AG04449 (cell line): ENCODE measurements at regions of chr10 and their contacts with region 1.

Region 1: GRCh38 chr10:98309366-98310355 is 41.7 kb upstream of the LOXL4 start:
- DNase-seq: peak; percentile 16
- H3K4me3 ChIP-seq: peak overlapping the region; percentile 15
- CTCF ChIP-seq: peak; percentile 96

Region 2: GRCh38 chr10:98242823-98243222 is 66.8 kb before region 1 on chr10:
- CTCF ChIA-PET with region 1: interaction called, 109 read pairs
- POLR2A ChIA-PET with region 1: no interaction called
- DNase-seq: no peak
- H3K4me3 ChIP-seq: no peak overlapping the region
- CTCF ChIP-seq: peak; percentile 50

Region 3: GRCh38 chr10:98262571-98262970 is 47.1 kb before region 1 on chr10:
- CTCF ChIA-PET with region 1: interaction called, 142 read pairs
- POLR2A ChIA-PET with region 1: no interaction called
- DNase-seq: no peak
- H3K4me3 ChIP-seq: no peak overlapping the region
- CTCF ChIP-seq: peak; percentile 49

Region 4: DNA sequence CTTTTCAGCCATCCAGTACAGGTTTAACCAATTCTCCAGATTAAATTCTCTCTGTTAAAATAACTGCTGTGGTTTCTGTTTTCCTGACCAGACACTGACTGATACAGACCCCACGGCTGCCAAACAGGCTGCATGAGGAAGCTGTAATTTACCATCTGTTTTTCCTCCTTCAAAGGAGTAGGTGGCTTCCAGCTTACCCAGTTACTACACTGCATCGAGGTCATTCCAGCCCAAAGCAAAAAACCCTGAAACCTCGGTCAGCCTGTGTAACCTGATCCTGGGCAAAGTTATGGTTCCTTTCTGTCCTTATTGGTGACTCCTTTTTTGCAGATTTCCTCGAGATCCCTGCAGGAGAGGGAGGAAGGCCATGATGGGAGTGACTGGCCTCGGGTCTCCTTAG is 13.8 kb before region 1 on chr10:
- CTCF ChIA-PET with region 1: interaction called, 47 read pairs
- POLR2A ChIA-PET with region 1: interaction called, 9 read pairs
- DNase-seq: no peak
- H3K4me3 ChIP-seq: no peak overlapping the region
- CTCF ChIP-seq: no peak

Region 5: DNA sequence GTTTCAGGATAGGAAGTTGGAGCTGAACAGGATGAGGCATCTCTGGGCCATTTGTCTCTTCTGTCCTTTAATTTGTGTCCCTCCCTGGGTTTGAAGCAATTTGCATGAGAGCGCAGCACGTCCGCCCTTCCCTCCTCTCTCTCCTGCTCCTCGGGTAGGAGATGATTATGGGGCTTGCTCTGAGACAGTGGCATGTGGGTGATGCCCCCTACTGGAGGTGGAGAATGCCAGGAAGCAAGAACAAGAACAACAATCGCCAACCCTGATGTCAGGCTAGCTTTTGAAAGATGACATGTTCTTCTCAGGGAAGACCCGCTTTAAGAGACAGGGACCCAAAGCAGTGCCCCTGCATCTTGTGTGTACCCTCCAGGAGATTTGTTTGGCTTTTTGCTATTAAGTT is 22.2 kb after region 1 on chr10:
- CTCF ChIA-PET with region 1: interaction called, 14 read pairs
- POLR2A ChIA-PET with region 1: no interaction called
- DNase-seq: no peak
- H3K4me3 ChIP-seq: no peak overlapping the region
- CTCF ChIP-seq: no peak

Region 6: DNA sequence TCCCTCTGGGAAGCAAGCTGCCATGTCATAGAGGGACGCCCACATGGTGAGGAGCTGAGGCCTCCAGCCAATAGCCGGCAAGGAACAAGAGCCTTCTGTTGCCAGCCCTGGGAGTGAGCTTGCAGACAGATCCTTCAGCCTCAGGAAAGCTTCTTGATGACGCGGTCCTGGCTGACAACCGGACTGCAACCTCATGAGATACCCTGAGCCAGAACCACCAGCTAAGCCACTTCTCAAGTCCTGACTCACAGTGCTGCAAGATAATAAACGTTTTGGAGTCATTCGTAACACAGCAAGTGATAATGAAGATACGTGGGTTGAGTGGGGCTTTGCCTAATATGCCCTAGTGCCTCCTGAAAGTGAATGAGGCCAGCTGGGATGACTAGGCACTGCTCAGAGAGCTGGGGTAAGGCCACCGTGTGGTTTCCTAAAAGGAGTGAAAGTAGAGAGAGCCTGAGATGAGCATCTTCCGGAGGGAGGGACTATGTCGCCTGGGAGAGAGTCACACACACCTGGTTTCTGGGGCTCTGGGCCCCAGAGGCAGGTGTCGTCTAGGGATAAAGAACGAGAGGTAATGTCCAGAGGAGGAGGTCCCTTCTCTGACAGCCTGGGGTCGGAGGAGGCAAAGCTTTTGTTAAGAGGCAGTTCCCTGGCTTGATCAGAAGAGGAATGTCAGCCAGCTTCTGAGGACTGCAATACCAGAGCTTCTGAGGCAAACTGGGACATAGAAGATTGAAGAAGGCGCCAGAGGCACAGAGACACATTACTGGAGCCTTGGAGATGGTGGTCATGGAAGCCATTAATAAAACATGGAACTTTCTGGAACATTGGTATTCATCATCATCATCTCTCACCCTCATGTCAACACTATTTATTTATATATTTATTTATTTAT is 51.7 kb after region 1 on chr10:
- CTCF ChIA-PET with region 1: interaction called, 15 read pairs
- POLR2A ChIA-PET with region 1: no interaction called
- DNase-seq: peak; percentile 100
- H3K4me3 ChIP-seq: peak overlapping the region; percentile 38
- CTCF ChIP-seq: no peak

Region 7: DNA sequence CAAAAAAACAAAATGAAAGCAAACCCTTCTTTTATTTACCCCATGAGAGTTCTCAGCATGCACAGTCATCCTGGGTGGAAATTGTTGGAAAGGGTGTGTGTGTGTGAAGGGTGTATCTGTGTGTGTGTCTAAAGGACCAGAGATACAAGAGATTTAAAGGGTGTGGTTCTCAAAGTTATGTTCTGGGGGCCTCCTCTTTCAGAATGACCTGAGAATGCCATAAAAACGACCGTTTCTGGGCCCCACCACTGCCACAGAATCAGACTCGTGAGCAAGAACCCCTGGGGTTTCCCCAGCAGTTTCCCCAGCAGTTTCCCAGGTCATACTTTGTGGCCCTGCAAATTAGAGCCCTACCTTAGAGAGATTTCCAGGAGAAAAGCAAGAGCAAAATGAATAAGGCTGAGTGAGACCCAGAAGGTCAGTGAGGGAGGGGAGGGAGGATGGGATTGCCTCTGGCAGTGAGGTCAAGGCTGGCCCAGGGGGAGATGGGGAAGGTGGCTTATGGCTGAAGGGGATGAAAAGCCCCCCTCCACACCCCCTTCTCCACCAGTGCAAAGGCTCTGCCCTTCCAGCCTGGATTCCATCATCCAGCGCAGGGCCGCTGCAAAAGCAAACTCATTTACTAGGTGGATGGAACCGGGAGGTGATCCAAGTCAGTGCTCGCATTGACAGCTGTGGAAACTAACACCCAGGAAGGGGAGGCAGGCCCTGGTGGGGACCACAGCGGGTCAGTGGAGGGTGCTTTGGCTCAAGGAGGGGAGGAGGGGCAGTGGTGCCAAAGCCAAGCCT is 95.1 kb after region 1 on chr10:
- CTCF ChIA-PET with region 1: interaction called, 13 read pairs
- POLR2A ChIA-PET with region 1: no interaction called
- DNase-seq: peak; percentile 24
- H3K4me3 ChIP-seq: no peak overlapping the region
- CTCF ChIP-seq: no peak